Right cardiac atrium (tissue), 5 donors: ENCODE measurements at regions of chr12 and their contacts with region 1.

Region 1: DNA sequence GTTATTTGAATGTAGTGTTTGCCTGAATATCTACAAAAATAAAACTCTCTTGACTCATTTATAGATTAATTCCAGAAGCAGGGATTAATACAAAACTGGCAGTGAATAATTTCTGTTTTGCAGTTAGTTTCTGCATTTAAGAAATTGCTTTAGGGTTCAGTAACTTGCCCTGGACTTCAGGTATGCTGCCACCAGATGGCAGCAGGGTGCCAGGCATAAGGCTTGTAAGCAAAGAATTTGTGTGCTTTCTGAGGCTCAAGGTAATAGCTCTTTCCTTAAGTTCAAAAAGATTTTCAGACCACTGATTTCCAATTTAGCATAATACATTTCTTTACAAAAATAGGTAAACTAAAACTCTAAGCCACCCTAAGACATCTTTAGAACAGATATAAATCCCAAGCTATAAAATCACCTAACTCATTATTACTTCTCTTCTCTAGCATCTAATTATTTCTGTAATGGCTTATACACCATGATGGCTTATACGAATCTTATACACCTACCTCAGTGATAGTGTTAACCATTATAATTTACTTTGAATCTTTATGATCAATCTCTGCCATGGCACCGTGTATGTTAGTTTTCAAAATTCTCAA is 398.3 kb downstream of the APAF1 start:
- DNase-seq: peak; percentile 68 to 89 (median 77)
- ATAC-seq: no peak
- H3K4me3 ChIP-seq: no peak overlapping the region
- H3K27ac ChIP-seq: no peak overlapping the region
- H3K4me1 ChIP-seq: no peaks in the 10 kb centered on the region
- H3K27me3 ChIP-seq: no peaks in the 10 kb centered on the region

Region 2: GRCh38 chr12:99767809-99768208 is 724.4 kb after region 1 on chr12:
- intact Hi-C with region 1: loop called in 1 of 4 experiments (anchors 5 kb)
- DNase-seq: no peak
- ATAC-seq: no peak
- H3K4me3 ChIP-seq: no peak overlapping the region
- H3K27ac ChIP-seq: no peak overlapping the region
- H3K4me1 ChIP-seq: no peaks in the 10 kb centered on the region
- H3K27me3 ChIP-seq: no peaks in the 10 kb centered on the region